ENCODE measurements at regions of chr13 and their contacts with region 1.

Region 1: GRCh38 chr13:28805193-28805819 is 14.8 kb upstream of the MTUS2 start:
- DNase-seq: peak in 1 of 5 donors; percentile 45
- ATAC-seq: no peak
- H3K4me3 ChIP-seq: no peak overlapping the region
- H3K27ac ChIP-seq: no peak overlapping the region
- H3K4me1 ChIP-seq: no peaks in the 10 kb centered on the region
- H3K27me3 ChIP-seq: peaks cover 0 to 9% (median 0%) of the 10 kb centered on the region in 9 donors
- CTCF ChIP-seq: peak; percentile 20 to 51 (median 36)
- POLR2A ChIP-seq: no peak

Region 2: DNA sequence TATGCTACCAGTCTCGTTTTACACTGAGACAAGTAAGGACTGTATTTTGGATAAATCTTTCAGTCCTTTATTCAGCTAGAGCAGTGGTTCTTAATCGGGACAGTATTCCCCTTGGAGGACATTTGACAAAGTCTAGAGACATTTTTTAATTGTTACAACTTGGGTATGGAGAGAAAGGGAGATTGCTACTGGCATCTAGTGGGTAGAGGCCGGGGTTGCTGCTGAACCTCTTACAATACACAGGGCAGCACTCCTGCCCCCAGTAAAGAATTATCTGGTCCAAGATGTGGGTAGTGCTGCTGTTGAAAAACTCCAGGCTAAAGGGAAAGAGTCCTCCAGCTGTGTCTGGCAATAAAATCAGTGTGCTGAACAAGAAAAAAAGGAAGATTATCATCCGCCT is 455.4 kb after region 1 on chr13:
- intact Hi-C with region 1: loop called in 3 of 10 experiments (anchors 10 kb)
- DNase-seq: no peak
- ATAC-seq: peak; percentile 56 to 87 (median 83)
- H3K4me3 ChIP-seq: no peak overlapping the region
- H3K27ac ChIP-seq: no peak overlapping the region
- H3K4me1 ChIP-seq: peaks cover 0 to 3% (median 0%) of the 10 kb centered on the region in 12 donors
- H3K27me3 ChIP-seq: no peaks in the 10 kb centered on the region
- CTCF ChIP-seq: peak in 10 of 12 donors; percentile 16 to 52 (median 39)
- POLR2A ChIP-seq: no peak

Region 3: DNA sequence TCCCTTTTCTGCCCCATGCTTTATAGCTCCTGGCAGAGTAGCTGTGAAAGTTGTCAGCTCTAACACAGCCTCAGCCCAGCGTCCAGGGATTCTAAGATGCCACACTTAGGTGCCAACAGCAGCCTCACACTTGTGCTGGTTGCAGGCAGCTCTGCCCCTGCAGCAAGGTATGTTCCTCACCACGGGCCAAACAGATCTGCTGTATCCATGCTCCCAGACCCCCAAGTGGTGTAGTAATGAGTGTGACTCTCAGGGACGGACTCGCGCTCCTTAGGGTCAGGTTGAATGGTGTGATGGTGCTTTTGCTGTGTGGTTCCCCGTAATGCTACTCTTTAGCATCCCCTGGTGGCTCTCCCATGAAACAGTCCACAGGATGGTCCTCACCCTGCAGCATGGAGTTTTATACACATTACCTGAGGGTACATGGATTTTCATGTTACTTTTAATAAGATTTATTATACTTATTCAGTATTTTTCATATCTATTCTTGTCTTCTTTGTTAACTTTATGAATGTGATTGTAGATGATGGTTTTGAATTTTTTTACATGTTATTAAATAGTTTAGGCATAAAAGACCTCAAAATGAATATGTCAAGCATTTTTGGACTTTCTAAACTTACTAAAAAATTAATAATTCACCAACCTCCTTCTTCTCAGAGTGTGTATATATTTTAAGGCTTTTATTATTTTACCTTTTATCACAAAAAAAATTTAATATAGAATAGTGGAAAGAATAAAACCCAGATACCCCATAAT is 557.7 kb after region 1 on chr13:
- intact Hi-C with region 1: loop called in 4 of 10 experiments (anchors 5 to 10 kb)
- DNase-seq: peak in 2 of 5 donors; percentile 15 to 27
- ATAC-seq: peak; percentile 74 to 91 (median 84)
- H3K4me3 ChIP-seq: no peak overlapping the region
- H3K27ac ChIP-seq: no peak overlapping the region
- H3K4me1 ChIP-seq: no peaks in the 10 kb centered on the region
- H3K27me3 ChIP-seq: no peaks in the 10 kb centered on the region
- CTCF ChIP-seq: peak; percentile 61 to 86 (median 79)
- POLR2A ChIP-seq: no peak

Region 4: GRCh38 chr13:29369060-29369743 is 563.9 kb after region 1 on chr13:
- intact Hi-C with region 1: loop called in 4 of 10 experiments (anchors 5 to 10 kb)
- DNase-seq: no peak
- ATAC-seq: peak in 2 of 4 donors; percentile 45 to 50
- H3K4me3 ChIP-seq: no peak overlapping the region
- H3K27ac ChIP-seq: no peak overlapping the region
- H3K4me1 ChIP-seq: peaks cover 0 to 5% (median 0%) of the 10 kb centered on the region in 12 donors
- H3K27me3 ChIP-seq: peaks cover 0 to 5% (median 0%) of the 10 kb centered on the region in 9 donors
- CTCF ChIP-seq: peak; percentile 9 to 58 (median 40)
- POLR2A ChIP-seq: no peak